OCI-LY7 (cell line): ENCODE measurements at regions of chr13 and their contacts with region 1.

Region 1: DNA sequence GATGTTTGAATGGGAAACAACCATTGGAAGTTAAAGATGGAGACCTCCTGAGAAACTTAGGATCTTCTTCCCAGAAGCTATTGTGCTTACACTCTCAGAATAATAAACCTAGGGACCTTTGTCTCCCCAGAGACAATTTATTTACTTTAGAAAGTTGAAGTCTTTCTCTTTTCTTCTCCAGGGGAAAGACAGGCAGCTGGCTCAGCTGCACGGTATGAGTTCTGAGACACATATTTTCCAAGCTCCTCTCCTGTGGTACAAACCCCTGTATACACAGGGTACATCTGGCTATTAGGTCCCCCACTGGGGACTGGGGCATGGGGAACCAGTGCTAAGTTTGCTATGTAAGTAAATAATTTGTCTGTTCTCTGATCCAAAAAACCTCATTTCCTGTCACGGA is 67.5 kb upstream of the POSTN start:
- DNase-seq: no peak
- H3K4me3 ChIP-seq: no peak overlapping the region
- H3K27ac ChIP-seq: no peak overlapping the region
- H3K4me1 ChIP-seq: no peaks in the 10 kb centered on the region
- CTCF ChIP-seq: no peak

Region 2: GRCh38 chr13:37395566-37395965 is 270.5 kb before region 1 on chr13:
- CTCF ChIA-PET with region 1: no interaction called
- POLR2A ChIA-PET with region 1: no interaction called
- intact Hi-C with region 1: no loop called
- DNase-seq: no peak
- H3K4me3 ChIP-seq: no peak overlapping the region
- H3K27ac ChIP-seq: no peak overlapping the region
- H3K4me1 ChIP-seq: no peaks in the 10 kb centered on the region
- CTCF ChIP-seq: no peak

Region 3: DNA sequence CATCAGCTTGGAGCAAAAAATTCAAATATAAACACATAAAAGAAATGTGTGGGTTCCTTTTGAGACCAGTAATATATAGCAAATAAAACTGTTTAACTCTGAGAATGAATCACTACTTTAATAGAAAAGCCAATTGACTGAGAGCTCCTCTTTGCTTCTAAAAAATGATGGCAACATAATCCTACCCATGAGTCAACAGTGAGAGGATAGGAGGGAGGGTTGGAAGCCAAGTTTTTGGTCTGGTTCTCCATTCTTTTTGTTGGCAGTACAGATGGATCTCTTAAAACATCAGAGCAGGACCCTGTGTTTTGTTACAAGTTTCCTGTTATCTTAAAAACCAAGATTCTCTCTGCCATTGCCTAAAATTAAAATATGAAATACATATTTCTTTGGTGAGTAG is 17.4 kb before region 1 on chr13:
- CTCF ChIA-PET with region 1: no interaction called
- POLR2A ChIA-PET with region 1: interaction called, 10 read pairs
- intact Hi-C with region 1: no loop called
- DNase-seq: no peak
- H3K4me3 ChIP-seq: no peak overlapping the region
- H3K27ac ChIP-seq: no peak overlapping the region
- H3K4me1 ChIP-seq: no peaks in the 10 kb centered on the region
- CTCF ChIP-seq: no peak